ENCODE measurements at regions of chr9 and their contacts with region 1.

Region 1: DNA sequence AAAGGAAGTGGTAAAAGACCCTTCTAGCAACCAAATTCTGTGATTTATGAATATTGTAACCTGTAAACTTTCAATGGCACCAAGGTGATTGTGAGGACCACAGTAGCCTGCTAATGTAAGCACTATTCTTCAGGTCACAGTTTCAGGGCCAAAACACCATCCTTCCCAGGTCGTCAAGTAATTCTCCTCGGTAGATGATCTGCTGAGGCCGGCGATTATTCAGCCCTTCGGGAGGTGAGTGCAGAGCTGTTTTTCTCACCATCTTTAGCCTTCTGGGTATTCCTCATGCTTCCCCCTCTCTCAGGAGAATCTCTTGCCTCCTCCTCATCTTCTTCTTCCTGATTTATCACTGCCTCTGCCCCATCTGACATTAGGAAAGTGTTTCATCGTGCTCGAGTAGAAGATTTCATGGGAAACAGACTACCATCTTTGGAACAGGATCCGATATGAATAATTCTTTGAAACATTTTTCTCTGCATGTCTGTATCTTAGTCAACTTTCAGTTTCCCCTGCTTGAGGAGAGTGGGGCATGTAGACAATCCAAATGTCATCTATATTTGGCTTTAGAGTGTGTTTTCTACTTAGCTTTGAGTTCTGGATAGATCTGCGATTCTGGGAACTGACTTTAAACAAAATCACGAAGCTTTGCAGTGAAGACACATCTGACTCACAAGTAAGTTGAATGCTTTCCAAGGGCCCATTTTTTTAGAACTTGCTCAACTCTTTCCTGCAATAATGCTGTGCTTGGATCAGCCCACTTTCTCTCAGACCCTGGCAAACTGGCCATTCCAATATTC is 173.9 kb downstream of the AOPEP start:
- DNase-seq: no peak

Region 2: DNA sequence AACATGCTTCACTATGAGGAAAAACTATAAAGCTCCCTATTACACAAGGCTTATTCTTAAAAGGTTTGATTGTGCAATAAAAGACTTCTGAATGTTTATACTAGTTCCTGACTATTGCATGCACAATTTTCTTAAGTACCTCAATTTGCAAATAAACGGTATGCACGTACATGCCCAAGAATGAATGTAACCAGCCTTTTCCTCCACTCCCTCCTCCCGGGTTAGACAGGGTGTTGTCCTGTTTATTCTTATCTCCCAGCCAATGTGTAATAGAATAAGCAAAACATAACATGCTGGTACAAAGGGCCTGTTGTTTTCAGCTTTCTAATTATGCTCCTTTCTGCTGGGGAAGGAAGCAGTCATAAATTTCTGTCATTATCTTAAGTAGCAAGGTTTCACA is 94.8 kb before region 1 on chr9:
- intact Hi-C with region 1: loop called in 1 of 2 experiments (anchors 10 kb)
- DNase-seq: no peak

Measured in posterior vena cava (tissue), 2 donors.